ENCODE measurements at regions of chr9 and their contacts with region 1.

Region 1: GRCh38 chr9:73183917-73184861 is 32.5 kb downstream of the ANXA1 start:
- DNase-seq: peak in 2 of 9 experiments; percentile 63 to 75
- ATAC-seq: no peak
- H3K4me3 ChIP-seq: no peak overlapping the region
- H3K4me3 Mint-ChIP-seq: no peak overlapping the region
- H3K27ac ChIP-seq: no peak overlapping the region
- H3K27ac Mint-ChIP-seq: no peak overlapping the region
- H3K4me1 ChIP-seq: no peaks in the 10 kb centered on the region
- H3K4me1 Mint-ChIP-seq: no peaks in the 10 kb centered on the region
- H3K27me3 ChIP-seq: peaks cover 0 to 2% of the 10 kb centered on the region in 2 experiments
- H3K27me3 Mint-ChIP-seq: peaks cover 3% of the 10 kb centered on the region
- CTCF ChIP-seq: peak; percentile 91

Region 2: GRCh38 chr9:72292256-72292682 is 891.9 kb before region 1 on chr9:
- CTCF ChIA-PET with region 1: no interaction called
- POLR2A ChIA-PET with region 1: no interaction called
- intact Hi-C with region 1: loop called in 1 of 2 experiments (anchors 5 kb)
- DNase-seq: peak in 2 of 9 experiments; percentile 37 to 49
- ATAC-seq: no peak
- H3K4me3 ChIP-seq: no peak overlapping the region
- H3K4me3 Mint-ChIP-seq: no peak overlapping the region
- H3K27ac ChIP-seq: no peak overlapping the region
- H3K27ac Mint-ChIP-seq: no peak overlapping the region
- H3K4me1 ChIP-seq: no peaks in the 10 kb centered on the region
- H3K4me1 Mint-ChIP-seq: no peaks in the 10 kb centered on the region
- H3K27me3 ChIP-seq: no peaks in the 10 kb centered on the region
- H3K27me3 Mint-ChIP-seq: peaks cover 11% of the 10 kb centered on the region
- CTCF ChIP-seq: peak; percentile 68

Region 3: GRCh38 chr9:72856972-72857623 is 327.1 kb before region 1 on chr9:
- CTCF ChIA-PET with region 1: no interaction called
- POLR2A ChIA-PET with region 1: no interaction called
- intact Hi-C with region 1: loop called (anchors 2 to 10 kb)
- DNase-seq: peak in 2 of 9 experiments; percentile 18 to 28
- ATAC-seq: no peak
- H3K4me3 ChIP-seq: no peak overlapping the region
- H3K4me3 Mint-ChIP-seq: no peak overlapping the region
- H3K27ac ChIP-seq: no peak overlapping the region
- H3K27ac Mint-ChIP-seq: no peak overlapping the region
- H3K4me1 ChIP-seq: no peaks in the 10 kb centered on the region
- H3K4me1 Mint-ChIP-seq: no peaks in the 10 kb centered on the region
- H3K27me3 ChIP-seq: no peaks in the 10 kb centered on the region
- H3K27me3 Mint-ChIP-seq: no peaks in the 10 kb centered on the region
- CTCF ChIP-seq: no peak

Region 4: DNA sequence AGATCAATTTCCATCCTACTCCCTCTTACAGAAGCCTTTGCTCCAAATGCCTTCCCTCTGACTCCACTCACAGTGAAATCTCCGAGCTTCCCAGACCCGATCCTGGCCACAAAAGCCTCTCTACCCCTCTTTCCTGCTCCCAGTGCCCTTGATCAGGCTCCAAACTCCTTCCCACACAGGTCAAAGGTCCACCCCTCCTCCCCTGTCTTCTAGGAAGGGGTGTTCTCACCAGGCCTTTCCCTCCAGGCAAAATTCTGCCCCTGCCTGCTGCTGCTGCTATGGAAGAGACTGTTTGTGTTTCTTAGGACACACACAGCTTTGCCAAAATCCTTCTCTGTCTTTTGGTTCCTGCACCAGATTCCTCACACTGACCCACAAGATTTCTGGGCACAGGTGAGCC is 145.6 kb before region 1 on chr9:
- CTCF ChIA-PET with region 1: no interaction called
- POLR2A ChIA-PET with region 1: no interaction called
- intact Hi-C with region 1: no loop called
- DNase-seq: no peak
- ATAC-seq: no peak
- H3K4me3 ChIP-seq: no peak overlapping the region
- H3K4me3 Mint-ChIP-seq: no peak overlapping the region
- H3K27ac ChIP-seq: no peak overlapping the region
- H3K27ac Mint-ChIP-seq: no peak overlapping the region
- H3K4me1 ChIP-seq: no peaks in the 10 kb centered on the region
- H3K4me1 Mint-ChIP-seq: no peaks in the 10 kb centered on the region
- H3K27me3 ChIP-seq: no peaks in the 10 kb centered on the region
- H3K27me3 Mint-ChIP-seq: peaks cover 18% of the 10 kb centered on the region
- CTCF ChIP-seq: no peak

Region 5: GRCh38 chr9:73104342-73104741 is 79.8 kb before region 1 on chr9:
- CTCF ChIA-PET with region 1: interaction called, 100 read pairs
- POLR2A ChIA-PET with region 1: interaction called, 3 read pairs
- intact Hi-C with region 1: loop called (anchors 1 kb)
- DNase-seq: no peak
- ATAC-seq: no peak
- H3K4me3 ChIP-seq: no peak overlapping the region
- H3K4me3 Mint-ChIP-seq: no peak overlapping the region
- H3K27ac ChIP-seq: no peak overlapping the region
- H3K27ac Mint-ChIP-seq: no peak overlapping the region
- H3K4me1 ChIP-seq: no peaks in the 10 kb centered on the region
- H3K4me1 Mint-ChIP-seq: no peaks in the 10 kb centered on the region
- H3K27me3 ChIP-seq: no peaks in the 10 kb centered on the region
- H3K27me3 Mint-ChIP-seq: no peaks in the 10 kb centered on the region
- CTCF ChIP-seq: no peak

Region 6: GRCh38 chr9:73143606-73144328 is 40.4 kb before region 1 on chr9:
- CTCF ChIA-PET with region 1: interaction called, 4 read pairs
- POLR2A ChIA-PET with region 1: no interaction called
- intact Hi-C with region 1: loop called in 1 of 2 experiments (anchors 5 kb)
- DNase-seq: no peak
- ATAC-seq: no peak
- H3K4me3 ChIP-seq: no peak overlapping the region
- H3K4me3 Mint-ChIP-seq: no peak overlapping the region
- H3K27ac ChIP-seq: no peak overlapping the region
- H3K27ac Mint-ChIP-seq: no peak overlapping the region
- H3K4me1 ChIP-seq: peaks cover 3% of the 10 kb centered on the region
- H3K4me1 Mint-ChIP-seq: peaks cover 12% of the 10 kb centered on the region
- H3K27me3 ChIP-seq: no peaks in the 10 kb centered on the region
- H3K27me3 Mint-ChIP-seq: no peaks in the 10 kb centered on the region
- CTCF ChIP-seq: no peak

Region 7: GRCh38 chr9:73162987-73163768 is 21.0 kb before region 1 on chr9:
- CTCF ChIA-PET with region 1: no interaction called
- POLR2A ChIA-PET with region 1: no interaction called
- intact Hi-C with region 1: no loop called
- DNase-seq: peak in 2 of 9 experiments; percentile 35 to 57
- ATAC-seq: peak; percentile 75
- H3K4me3 ChIP-seq: no peak overlapping the region
- H3K4me3 Mint-ChIP-seq: no peak overlapping the region
- H3K27ac ChIP-seq: peak overlapping the region in 1 of 2 experiments; percentile 57
- H3K27ac Mint-ChIP-seq: peak overlapping the region; percentile 76
- H3K4me1 ChIP-seq: peaks cover 22% of the 10 kb centered on the region
- H3K4me1 Mint-ChIP-seq: peaks cover 39% of the 10 kb centered on the region
- H3K27me3 ChIP-seq: no peaks in the 10 kb centered on the region
- H3K27me3 Mint-ChIP-seq: no peaks in the 10 kb centered on the region
- CTCF ChIP-seq: no peak

Region 8: DNA sequence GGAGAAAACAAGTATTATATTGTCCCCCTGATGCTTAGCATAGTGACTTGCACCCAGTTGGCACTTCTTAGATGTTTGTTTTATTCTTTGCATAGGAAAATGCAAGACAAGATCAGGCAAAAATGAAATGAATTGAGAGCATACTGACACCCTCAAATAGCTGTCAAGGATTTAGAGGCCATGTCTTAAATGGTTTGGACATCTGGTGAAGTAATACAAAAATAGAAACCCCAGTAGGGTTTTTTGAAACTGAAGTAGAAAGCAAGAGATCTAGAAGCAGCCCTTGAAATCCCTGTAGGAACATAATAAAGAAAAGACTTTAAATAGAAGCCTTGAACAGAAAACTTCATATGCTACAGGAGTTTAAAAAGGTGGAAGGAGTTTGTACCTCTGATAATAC is 141.8 kb after region 1 on chr9:
- CTCF ChIA-PET with region 1: no interaction called
- POLR2A ChIA-PET with region 1: no interaction called
- intact Hi-C with region 1: no loop called
- DNase-seq: no peak
- ATAC-seq: no peak
- H3K4me3 ChIP-seq: no peak overlapping the region
- H3K4me3 Mint-ChIP-seq: no peak overlapping the region
- H3K27ac ChIP-seq: no peak overlapping the region
- H3K27ac Mint-ChIP-seq: no peak overlapping the region
- H3K4me1 ChIP-seq: no peaks in the 10 kb centered on the region
- H3K4me1 Mint-ChIP-seq: no peaks in the 10 kb centered on the region
- H3K27me3 ChIP-seq: no peaks in the 10 kb centered on the region
- H3K27me3 Mint-ChIP-seq: no peaks in the 10 kb centered on the region
- CTCF ChIP-seq: no peak

Region 9: DNA sequence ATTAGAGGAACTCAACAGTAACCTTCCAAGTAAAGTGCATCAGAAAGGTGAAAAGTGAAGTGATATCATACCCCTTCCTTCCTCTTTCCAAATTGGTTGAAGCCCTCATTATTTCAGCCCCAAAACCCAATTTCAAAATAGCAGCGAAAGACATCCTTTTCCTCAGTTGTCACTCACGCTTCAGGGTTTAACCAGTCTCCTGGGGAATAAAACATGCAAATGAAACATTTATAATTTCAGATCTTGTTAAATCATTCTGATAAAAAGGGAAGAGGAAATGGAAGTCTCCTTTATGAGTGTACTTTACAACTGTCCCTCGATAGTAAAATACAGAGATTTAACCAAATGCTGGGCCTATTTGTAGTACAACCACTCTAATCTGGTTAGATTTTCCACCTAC is 1681.0 kb after region 1 on chr9:
- CTCF ChIA-PET with region 1: no interaction called
- POLR2A ChIA-PET with region 1: no interaction called
- intact Hi-C with region 1: loop called in 1 of 2 experiments (anchors 5 kb)
- DNase-seq: no peak
- ATAC-seq: no peak
- H3K4me3 ChIP-seq: no peak overlapping the region
- H3K4me3 Mint-ChIP-seq: no peak overlapping the region
- H3K27ac ChIP-seq: no peak overlapping the region
- H3K27ac Mint-ChIP-seq: no peak overlapping the region
- H3K4me1 ChIP-seq: no peaks in the 10 kb centered on the region
- H3K4me1 Mint-ChIP-seq: no peaks in the 10 kb centered on the region
- H3K27me3 ChIP-seq: no peaks in the 10 kb centered on the region
- H3K27me3 Mint-ChIP-seq: peaks cover 8% of the 10 kb centered on the region
- CTCF ChIP-seq: no peak